CD4-positive, alpha-beta memory T cell (primary cell): ENCODE measurements at regions of chr20 and their contacts with region 1.

Region 1: GRCh38 chr20:32972181-32973076 is 31.8 kb downstream of the SUN5 start:
- DNase-seq: peak; percentile 91 to 97 (median 93)
- H3K4me3 ChIP-seq: peak overlapping the region; percentile 13 to 42
- H3K4me3 Mint-ChIP-seq: peak overlapping the region in 1 of 8 donors; percentile 36
- H3K27ac ChIP-seq: peak overlapping the region; percentile 94
- H3K27ac Mint-ChIP-seq: no peak overlapping the region
- H3K4me1 ChIP-seq: peaks cover 91% of the 10 kb centered on the region
- H3K4me1 Mint-ChIP-seq: peaks cover 8 to 70% (median 34%) of the 10 kb centered on the region in 4 donors
- H3K27me3 ChIP-seq: no peaks in the 10 kb centered on the region
- H3K27me3 Mint-ChIP-seq: no peaks in the 10 kb centered on the region

Region 2: GRCh38 chr20:32819992-32820710 is 152.3 kb before region 1 on chr20:
- CTCF ChIA-PET with region 1: no interaction called
- POLR2A ChIA-PET with region 1: interaction called, 6 read pairs
- intact Hi-C with region 1: loop called (anchors 10 kb)
- DNase-seq: peak; percentile 85 to 93 (median 91)
- H3K4me3 ChIP-seq: peak overlapping the region; percentile 83 to 94
- H3K4me3 Mint-ChIP-seq: peak overlapping the region; percentile 96 to 99 (median 98)
- H3K27ac ChIP-seq: peak overlapping the region; percentile 90
- H3K27ac Mint-ChIP-seq: peak overlapping the region; percentile 98 to 100 (median 99)
- H3K4me1 ChIP-seq: peaks cover 49% of the 10 kb centered on the region
- H3K4me1 Mint-ChIP-seq: peaks cover 34 to 48% (median 40%) of the 10 kb centered on the region in 4 donors
- H3K27me3 ChIP-seq: no peaks in the 10 kb centered on the region
- H3K27me3 Mint-ChIP-seq: no peaks in the 10 kb centered on the region

Region 3: GRCh38 chr20:32982617-32983458 is 10.4 kb after region 1 on chr20:
- CTCF ChIA-PET with region 1: interaction called, 9 read pairs
- POLR2A ChIA-PET with region 1: interaction called, 15 read pairs
- intact Hi-C with region 1: no loop called
- DNase-seq: no peak
- H3K4me3 ChIP-seq: no peak overlapping the region
- H3K4me3 Mint-ChIP-seq: no peak overlapping the region
- H3K27ac ChIP-seq: no peak overlapping the region
- H3K27ac Mint-ChIP-seq: peak overlapping the region in 4 of 7 donors; percentile 47 to 81 (median 52)
- H3K4me1 ChIP-seq: peaks cover 1% of the 10 kb centered on the region
- H3K4me1 Mint-ChIP-seq: peaks cover 7 to 23% (median 8%) of the 10 kb centered on the region in 4 donors
- H3K27me3 ChIP-seq: no peaks in the 10 kb centered on the region
- H3K27me3 Mint-ChIP-seq: no peaks in the 10 kb centered on the region

Region 4: DNA sequence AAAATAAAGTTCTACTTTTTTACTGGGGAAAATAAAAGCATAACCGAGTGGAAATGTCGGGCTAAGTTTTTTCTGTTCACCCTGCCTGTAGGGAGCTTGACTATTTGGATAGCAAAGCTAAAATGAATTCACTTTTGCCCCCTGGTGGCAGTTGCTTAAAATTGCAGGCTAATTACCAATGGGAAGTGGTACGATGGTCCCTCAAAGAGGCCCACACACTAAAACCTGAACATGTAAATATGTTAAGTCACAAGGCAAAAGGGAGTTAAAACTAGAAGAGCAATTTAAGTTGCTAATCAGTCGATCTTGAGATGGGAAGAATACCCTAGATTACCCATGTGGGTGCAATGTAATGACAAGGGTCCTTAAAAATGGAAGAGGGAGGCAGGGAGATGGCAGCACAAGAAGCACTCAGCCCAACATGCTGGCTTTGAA is 32.7 kb after region 1 on chr20:
- CTCF ChIA-PET with region 1: interaction called, 6 read pairs
- POLR2A ChIA-PET with region 1: interaction called, 9 read pairs
- intact Hi-C with region 1: loop called (anchors 5 kb)
- DNase-seq: peak in 4 of 5 donors; percentile 19 to 32 (median 28)
- H3K4me3 ChIP-seq: no peak overlapping the region
- H3K4me3 Mint-ChIP-seq: no peak overlapping the region
- H3K27ac ChIP-seq: no peak overlapping the region
- H3K27ac Mint-ChIP-seq: peak overlapping the region in 1 of 7 donors; percentile 35
- H3K4me1 ChIP-seq: peaks cover 11% of the 10 kb centered on the region
- H3K4me1 Mint-ChIP-seq: peaks cover 6 to 29% (median 14%) of the 10 kb centered on the region in 4 donors
- H3K27me3 ChIP-seq: no peaks in the 10 kb centered on the region
- H3K27me3 Mint-ChIP-seq: no peaks in the 10 kb centered on the region

Region 5: GRCh38 chr20:33531047-33531877 is 558.8 kb after region 1 on chr20:
- CTCF ChIA-PET with region 1: no interaction called
- POLR2A ChIA-PET with region 1: no interaction called
- intact Hi-C with region 1: no loop called
- DNase-seq: no peak
- H3K4me3 ChIP-seq: no peak overlapping the region
- H3K4me3 Mint-ChIP-seq: peak overlapping the region in 1 of 8 donors; percentile 26
- H3K27ac ChIP-seq: no peak overlapping the region
- H3K27ac Mint-ChIP-seq: peak overlapping the region in 3 of 7 donors; percentile 12 to 63 (median 61)
- H3K4me1 ChIP-seq: peaks cover 6% of the 10 kb centered on the region
- H3K4me1 Mint-ChIP-seq: peaks cover 21 to 34% (median 29%) of the 10 kb centered on the region in 4 donors
- H3K27me3 ChIP-seq: no peaks in the 10 kb centered on the region
- H3K27me3 Mint-ChIP-seq: no peaks in the 10 kb centered on the region